ENCODE measurements at regions of chr1 and their contacts with region 1.

Region 1: DNA sequence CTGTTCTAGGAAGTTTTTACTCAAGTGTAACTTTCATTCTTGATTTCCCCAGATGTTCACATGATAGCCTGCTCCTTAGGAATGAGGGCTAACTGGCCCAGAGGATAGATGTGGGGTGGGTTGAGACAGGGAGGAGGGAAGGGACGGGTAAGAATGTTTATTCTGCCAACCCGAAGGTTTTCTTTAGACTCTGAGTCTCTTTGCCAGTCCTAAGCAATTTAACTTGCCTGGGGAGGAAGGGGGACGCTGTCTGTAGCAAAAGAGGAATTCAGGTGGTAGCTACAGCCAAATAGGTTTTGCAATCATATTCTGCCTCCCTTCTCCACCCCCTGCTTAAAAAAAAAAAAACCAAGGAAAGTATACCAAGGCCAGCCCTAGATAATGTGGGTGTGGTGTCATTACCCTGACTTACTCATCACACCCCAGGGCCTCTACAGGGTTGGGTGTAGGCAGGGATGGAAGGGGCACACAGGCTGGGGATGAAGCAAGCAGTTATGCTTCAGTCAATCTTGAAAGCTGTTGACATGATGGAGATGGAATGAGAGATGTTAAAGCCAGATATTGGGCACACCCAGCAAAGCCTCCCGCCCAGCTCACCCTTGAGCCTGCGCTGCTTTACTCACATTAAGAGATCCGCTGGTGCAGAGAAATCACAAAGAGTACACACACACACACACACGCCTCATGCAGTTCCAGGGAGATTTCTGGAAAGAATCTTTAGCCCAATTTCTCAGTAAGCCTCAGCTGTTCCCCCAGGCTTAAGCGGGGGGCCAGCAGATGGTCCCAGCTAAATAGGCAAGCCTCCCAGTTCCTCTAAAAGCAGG is 59.9 kb downstream of the PLXNA2 start:
- DNase-seq: peak; percentile 80 to 95 (median 86)
- ATAC-seq: peak; percentile 93
- H3K4me3 ChIP-seq: no peak overlapping the region
- H3K27ac ChIP-seq: no peak overlapping the region
- H3K4me1 ChIP-seq: peaks cover 49 to 54% of the 10 kb centered on the region in 2 experiments
- H3K27me3 ChIP-seq: no peaks in the 10 kb centered on the region
- CTCF ChIP-seq: peak in 1 of 3 experiments; percentile 6; a peak in 1 of 6 replicates
- EP300 ChIP-seq: peak; percentile 83; the same call in 1 of the 2 replicates
- POLR2A ChIP-seq: no peak
- RAD21 ChIP-seq: no peak; a peak in 1 of 4 replicates

Region 2: DNA sequence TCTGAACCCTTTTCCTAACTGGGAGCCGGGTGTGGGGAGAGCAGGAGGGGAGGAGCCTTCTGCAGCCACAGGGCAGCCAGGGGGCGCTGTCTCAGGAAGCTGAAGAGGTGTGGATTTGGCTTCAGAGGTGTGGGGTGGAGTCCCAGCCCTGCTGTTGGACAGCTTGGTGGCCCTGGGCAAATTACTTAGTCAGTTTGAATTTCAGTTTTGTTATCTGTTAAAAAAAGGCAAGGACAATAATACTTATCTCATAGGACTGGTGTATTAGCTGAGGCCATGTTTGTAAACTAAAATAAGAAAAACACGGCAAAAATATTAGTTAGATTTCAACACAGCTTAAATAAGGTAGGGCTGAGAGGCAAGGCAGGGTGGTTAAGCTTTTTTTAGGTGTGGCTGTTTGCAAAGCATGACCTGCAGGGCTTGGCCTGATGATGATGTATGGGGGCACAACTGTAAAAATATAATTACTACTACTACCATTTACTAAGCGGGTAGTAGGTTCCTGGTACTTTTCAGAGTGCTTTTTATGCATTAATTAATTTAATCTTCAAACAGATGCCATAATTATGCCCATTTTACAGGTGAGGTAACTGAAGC is 51.9 kb before region 1 on chr1:
- CTCF ChIA-PET with region 1: no interaction called
- POLR2A ChIA-PET with region 1: interaction called, 3 read pairs
- in situ Hi-C with region 1: no loop called
- intact Hi-C with region 1: loop called (anchors 5 kb)
- DNase-seq: peak; percentile 91 to 96 (median 93)
- ATAC-seq: peak; percentile 100
- H3K4me3 ChIP-seq: no peak overlapping the region
- H3K27ac ChIP-seq: no peak overlapping the region
- H3K4me1 ChIP-seq: no peaks in the 10 kb centered on the region; a peak in 2 of 5 replicates
- H3K27me3 ChIP-seq: peaks cover 13 to 47% of the 10 kb centered on the region in 2 experiments; a peak in 4 of 5 replicates
- CTCF ChIP-seq: peak; percentile 95 to 98 (median 98)
- EP300 ChIP-seq: peak; percentile 25; the same call in 1 of the 2 replicates
- POLR2A ChIP-seq: no peak
- RAD21 ChIP-seq: peak; percentile 83 to 88

Region 3: DNA sequence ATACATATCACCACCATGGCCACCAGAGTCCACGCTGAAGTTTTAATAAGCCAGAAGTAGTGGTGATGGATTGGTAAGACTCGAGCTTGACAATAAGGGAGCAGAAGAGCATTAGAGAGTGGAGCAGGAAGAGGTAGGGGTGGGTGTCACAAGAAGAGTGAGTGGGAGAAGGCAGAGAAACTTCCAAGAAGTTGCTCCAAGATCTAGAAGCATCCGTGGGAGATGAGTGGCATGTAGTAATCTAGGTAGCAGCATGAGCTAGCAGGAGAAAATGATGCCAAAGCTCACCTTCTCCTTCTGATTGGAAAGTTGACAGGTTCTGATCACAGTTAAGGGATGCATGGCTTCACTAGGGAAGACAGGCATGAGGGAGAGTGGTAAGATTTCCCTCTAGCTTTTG is 10.6 kb after region 1 on chr1:
- CTCF ChIA-PET with region 1: no interaction called
- POLR2A ChIA-PET with region 1: interaction called, 10 read pairs
- in situ Hi-C with region 1: no loop called
- intact Hi-C with region 1: no loop called
- DNase-seq: no peak
- ATAC-seq: no peak
- H3K4me3 ChIP-seq: no peak overlapping the region
- H3K27ac ChIP-seq: no peak overlapping the region
- H3K4me1 ChIP-seq: no peaks in the 10 kb centered on the region; a peak in 1 of 5 replicates
- H3K27me3 ChIP-seq: peaks cover 3 to 9% of the 10 kb centered on the region in 2 experiments; a peak in 2 of 5 replicates
- CTCF ChIP-seq: no peak
- EP300 ChIP-seq: no peak
- POLR2A ChIP-seq: no peak
- RAD21 ChIP-seq: no peak

Region 4: DNA sequence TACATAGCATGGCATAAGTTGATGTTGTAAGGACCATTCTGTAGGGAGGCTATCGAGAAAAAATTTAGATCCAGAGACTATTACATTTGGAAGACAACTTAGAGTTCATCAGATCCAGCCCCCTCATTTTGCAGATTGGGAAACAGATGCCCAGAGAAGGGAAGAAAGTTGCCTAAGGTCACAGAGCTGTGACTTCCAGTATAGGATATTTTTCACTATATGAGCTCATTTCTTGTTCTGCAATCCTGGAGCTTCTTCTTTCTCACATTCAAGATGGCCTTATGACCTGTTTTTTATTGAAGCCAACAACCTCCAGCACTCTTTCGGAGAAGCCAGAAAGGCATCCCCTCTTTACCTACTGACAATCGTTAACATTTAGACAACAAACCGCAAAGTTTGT is 481.6 kb after region 1 on chr1:
- CTCF ChIA-PET with region 1: no interaction called
- POLR2A ChIA-PET with region 1: no interaction called
- in situ Hi-C with region 1: no loop called
- intact Hi-C with region 1: no loop called
- DNase-seq: no peak
- ATAC-seq: no peak
- H3K4me3 ChIP-seq: no peak overlapping the region
- H3K27ac ChIP-seq: no peak overlapping the region
- H3K4me1 ChIP-seq: no peaks in the 10 kb centered on the region
- H3K27me3 ChIP-seq: no peaks in the 10 kb centered on the region
- CTCF ChIP-seq: no peak
- EP300 ChIP-seq: no peak
- POLR2A ChIP-seq: no peak
- RAD21 ChIP-seq: no peak

Measured in K562 (cell line).